GM23248 (cell line): ENCODE measurements at regions of chr9 and their contacts with region 1.

Region 1: GRCh38 chr9:20292002-20292401 is 330.3 kb downstream of the MLLT3 start:
- DNase-seq: peak; percentile 59
- H3K4me3 ChIP-seq: no peak overlapping the region
- H3K27ac ChIP-seq: no peak overlapping the region
- H3K4me1 ChIP-seq: 0 out of 2 replicates have a peak, but pooled peaks cover 3% of the 10 kb centered on the region
- H3K27me3 ChIP-seq: no peaks in the 10 kb centered on the region

Region 2: GRCh38 chr9:20197976-20198685 is 93.9 kb before region 1 on chr9:
- in situ Hi-C with region 1: loop called (anchors 25 kb)
- DNase-seq: peak; percentile 26
- H3K4me3 ChIP-seq: no peak overlapping the region
- H3K27ac ChIP-seq: no peak overlapping the region
- H3K4me1 ChIP-seq: no peaks in the 10 kb centered on the region
- H3K27me3 ChIP-seq: peaks cover 20% of the 10 kb centered on the region; the same call in 1 of the 2 replicates

Region 3: DNA sequence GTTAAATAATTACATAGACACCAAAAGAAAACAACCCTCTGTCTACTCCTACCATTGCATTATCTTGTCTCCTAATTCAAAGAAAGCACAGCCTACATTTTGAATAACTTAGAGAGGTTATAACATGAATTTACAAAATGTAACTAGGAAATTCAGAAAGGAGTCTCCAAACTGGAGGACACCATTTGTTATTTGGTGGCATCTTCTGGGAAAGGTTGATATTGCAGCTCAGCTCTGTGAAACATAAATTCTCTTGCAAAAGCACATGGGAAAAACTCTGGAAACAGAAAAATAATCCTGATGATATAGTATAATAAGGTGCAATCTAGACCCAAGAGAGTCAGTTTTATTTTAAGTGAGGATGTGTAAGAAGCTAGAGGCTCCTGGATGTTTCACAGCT is 115.0 kb after region 1 on chr9:
- in situ Hi-C with region 1: no loop called
- DNase-seq: no peak
- H3K4me3 ChIP-seq: no peak overlapping the region
- H3K27ac ChIP-seq: no peak overlapping the region
- H3K4me1 ChIP-seq: no peaks in the 10 kb centered on the region
- H3K27me3 ChIP-seq: no peaks in the 10 kb centered on the region